GM12878 (cell line): ENCODE measurements at regions of chr7 and their contacts with region 1.

Region 1: DNA sequence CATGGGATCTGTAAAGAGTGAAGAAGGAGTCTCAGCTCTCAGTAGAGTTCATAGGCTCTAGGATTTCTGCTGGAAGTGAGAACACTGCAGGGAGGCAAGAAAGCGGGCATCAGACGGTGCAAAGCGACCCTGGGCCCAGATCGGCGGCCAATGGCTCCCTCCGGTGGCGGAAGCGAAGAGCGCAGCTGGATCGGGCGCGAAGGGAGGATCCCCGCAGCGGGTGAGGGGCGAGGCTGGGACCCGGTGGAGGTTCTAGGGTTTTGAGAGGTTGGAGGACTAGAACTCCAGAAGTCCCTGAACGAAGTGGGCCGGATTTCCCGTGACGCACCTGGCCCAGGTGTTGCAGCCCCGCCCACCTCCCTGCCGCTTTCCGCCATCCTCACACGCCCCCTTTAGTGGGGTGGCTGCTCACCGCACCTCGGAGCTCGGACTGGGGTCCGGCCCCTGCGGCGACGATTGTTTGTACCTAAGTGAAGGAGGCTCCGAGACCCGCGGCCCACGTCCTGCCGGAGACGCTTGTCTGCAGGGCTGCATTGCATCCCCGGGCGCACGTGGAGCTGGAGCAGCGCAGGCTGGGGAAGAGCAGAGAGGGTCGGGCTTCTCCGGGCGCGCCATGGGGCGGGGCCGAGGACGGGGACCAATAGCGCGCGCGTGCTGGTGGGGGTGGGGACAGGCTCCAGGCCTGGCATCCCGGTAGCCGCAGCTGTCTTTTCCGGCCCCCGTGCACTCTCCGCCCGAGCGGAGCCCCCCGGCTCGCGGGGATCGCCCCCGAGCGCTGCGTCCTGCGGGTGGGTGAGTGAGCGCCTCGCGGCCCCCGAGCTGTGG is at the start of gene SLC12A9:
- DNase-seq: peak; percentile 45
- ATAC-seq: peak; percentile 99
- H3K4me3 ChIP-seq: peak within 1 kb of the TSS; percentile 91
- H3K27ac ChIP-seq: peak within 1 kb of the TSS; percentile 13
- H3K4me1 ChIP-seq: peaks cover 2% of the 10 kb centered on the region
- H3K27me3 ChIP-seq: no peaks in the 10 kb centered on the region
- CTCF ChIP-seq: peak; percentile 88 to 95 (median 92)
- EP300 ChIP-seq: 0 out of 4 replicates have a peak, but pooled peaks of 1 of the 2 experiments have one; percentile 9
- POLR2A ChIP-seq: peak; percentile 71
- RAD21 ChIP-seq: peak; percentile 92
- polyA plus RNA-seq, gene SLC12A9: 0.24 to 0.35 TPM

Region 2: GRCh38 chr7:100563809-100564400 is 288.4 kb before region 1 on chr7:
- CTCF ChIA-PET with region 1: interaction called, 5 read pairs
- POLR2A ChIA-PET with region 1: no interaction called
- RAD21 ChIA-PET with region 1: no interaction called
- SMC1A ChIA-PET with region 1: no interaction called
- in situ Hi-C with region 1: no loop called
- intact Hi-C with region 1: loop called (anchors 1 kb)
- DNase-seq: no peak
- ATAC-seq: peak; percentile 84
- H3K4me3 ChIP-seq: no peak overlapping the region
- H3K27ac ChIP-seq: no peak overlapping the region
- H3K4me1 ChIP-seq: peaks cover 8% of the 10 kb centered on the region
- H3K27me3 ChIP-seq: no peaks in the 10 kb centered on the region
- CTCF ChIP-seq: peak; percentile 94 to 98 (median 97)
- EP300 ChIP-seq: no peak
- POLR2A ChIP-seq: peak; percentile 35
- RAD21 ChIP-seq: peak; percentile 71

Region 3: GRCh38 chr7:100793806-100794660 is 58.2 kb before region 1 on chr7:
- CTCF ChIA-PET with region 1: interaction called, 238 read pairs
- POLR2A ChIA-PET with region 1: interaction called, 8 read pairs
- RAD21 ChIA-PET with region 1: interaction called, 147 read pairs
- SMC1A ChIA-PET with region 1: interaction called, 104 read pairs
- in situ Hi-C with region 1: no loop called
- intact Hi-C with region 1: loop called (anchors 1 kb)
- DNase-seq: no peak
- ATAC-seq: no peak
- H3K4me3 ChIP-seq: no peak overlapping the region
- H3K27ac ChIP-seq: no peak overlapping the region
- H3K4me1 ChIP-seq: no peaks in the 10 kb centered on the region
- H3K27me3 ChIP-seq: peaks cover 0 to 1% of the 10 kb centered on the region in 2 experiments; a peak in 2 of 4 replicates
- CTCF ChIP-seq: no peak
- EP300 ChIP-seq: no peak
- POLR2A ChIP-seq: no peak
- RAD21 ChIP-seq: no peak

Region 4: DNA sequence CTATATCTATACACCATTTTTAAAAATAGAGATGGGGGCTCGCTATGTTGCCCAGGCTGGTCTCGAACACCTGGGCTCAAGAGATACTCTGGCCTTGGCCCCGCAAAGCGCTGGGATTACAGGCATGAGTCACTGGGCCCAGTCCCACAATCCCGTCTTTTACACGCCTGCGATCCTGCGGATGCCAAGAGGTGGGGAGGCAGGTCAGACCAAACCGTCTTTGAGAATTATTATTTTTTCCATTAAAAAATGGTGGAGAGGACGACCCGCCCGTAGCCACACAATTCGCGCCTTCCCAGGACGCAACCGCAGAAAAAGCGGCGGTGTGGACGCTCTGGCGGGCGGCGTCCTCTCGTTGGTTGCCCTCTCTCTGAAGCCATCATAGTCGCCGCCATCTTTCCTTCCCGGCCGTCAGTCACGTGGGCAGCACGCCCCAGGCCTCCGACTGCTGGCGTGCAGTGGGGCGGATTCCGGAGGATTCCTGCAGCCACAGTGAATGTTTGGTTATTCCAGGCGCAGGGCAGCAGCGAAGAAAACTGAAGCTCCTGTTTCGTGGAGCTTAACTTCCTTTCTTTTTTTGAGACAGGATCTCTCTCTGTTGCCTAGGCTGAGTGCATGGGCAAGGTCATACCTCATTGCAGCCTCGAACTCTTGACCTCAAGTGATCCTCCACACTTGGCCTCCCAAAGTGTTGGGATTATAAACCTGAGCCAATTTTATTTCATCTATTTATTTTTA is 15.0 kb before region 1 on chr7:
- CTCF ChIA-PET with region 1: interaction called, 26 read pairs
- POLR2A ChIA-PET with region 1: no interaction called
- RAD21 ChIA-PET with region 1: no interaction called
- SMC1A ChIA-PET with region 1: interaction called, 3 read pairs
- in situ Hi-C with region 1: no loop called
- intact Hi-C with region 1: no loop called
- DNase-seq: peak; percentile 31
- ATAC-seq: peak; percentile 97
- H3K4me3 ChIP-seq: 0 out of 2 replicates have a peak overlapping the region, but pooled peaks have one; percentile 5
- H3K27ac ChIP-seq: no peak overlapping the region
- H3K4me1 ChIP-seq: no peaks in the 10 kb centered on the region; the same call in 1 of the 2 replicates
- H3K27me3 ChIP-seq: no peaks in the 10 kb centered on the region
- CTCF ChIP-seq: no peak
- EP300 ChIP-seq: no peak
- POLR2A ChIP-seq: peak; percentile 47; the same call in 1 of the 2 replicates
- RAD21 ChIP-seq: no peak

Region 5: GRCh38 chr7:100889761-100890634 is 37.7 kb after region 1 on chr7:
- CTCF ChIA-PET with region 1: interaction called, 9 read pairs
- POLR2A ChIA-PET with region 1: interaction called, 4 read pairs
- RAD21 ChIA-PET with region 1: interaction called, 12 read pairs
- SMC1A ChIA-PET with region 1: interaction called, 17 read pairs
- in situ Hi-C with region 1: no loop called
- intact Hi-C with region 1: no loop called
- DNase-seq: peak; percentile 73
- ATAC-seq: peak; percentile 89
- H3K4me3 ChIP-seq: peak overlapping the region; percentile 91
- H3K27ac ChIP-seq: peak overlapping the region; percentile 24
- H3K4me1 ChIP-seq: peaks cover 30% of the 10 kb centered on the region
- H3K27me3 ChIP-seq: no peaks in the 10 kb centered on the region
- CTCF ChIP-seq: no peak
- EP300 ChIP-seq: no peak
- POLR2A ChIP-seq: peak; percentile 36; the same call in 1 of the 2 replicates
- RAD21 ChIP-seq: no peak